Aorta (tissue), 5 donors: ENCODE measurements at regions of chr2 and their contacts with region 1.

Region 1: DNA sequence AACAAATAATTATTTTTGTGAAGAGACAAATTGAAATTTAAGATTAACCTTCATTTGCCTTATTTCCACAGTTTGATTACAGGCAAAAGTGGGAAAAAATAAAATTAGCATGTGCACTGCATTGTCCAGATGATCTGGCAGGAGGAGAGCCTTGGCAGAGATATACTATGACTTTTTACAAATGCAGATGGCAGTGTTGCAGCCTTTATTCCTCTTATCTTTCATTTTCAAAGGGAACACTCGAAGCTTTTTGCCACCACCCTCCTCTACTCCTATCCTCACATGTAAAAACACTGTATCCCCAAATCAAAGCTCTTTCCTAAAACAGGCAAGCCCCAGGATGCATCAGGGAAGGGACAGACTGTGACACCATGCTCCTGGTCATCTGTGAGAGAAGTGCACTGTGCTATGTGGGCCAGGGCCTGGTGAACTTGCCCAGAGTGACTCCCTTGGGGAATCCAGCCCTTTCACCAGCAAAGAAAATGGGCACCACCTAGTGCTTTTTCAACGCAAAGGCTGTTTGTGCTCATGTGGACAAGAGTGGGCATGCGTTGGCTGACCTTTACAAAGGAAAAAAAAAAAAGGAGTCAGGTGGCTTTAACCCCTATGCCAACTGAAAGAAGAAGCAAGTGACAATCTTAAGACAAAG is 74.7 kb upstream of the ETAA1 start:
- DNase-seq: peak; percentile 60 to 75
- ATAC-seq: peak; percentile 81
- H3K4me3 ChIP-seq: no peak overlapping the region
- H3K27ac ChIP-seq: peak overlapping the region in 1 of 2 donors; percentile 79
- H3K4me1 ChIP-seq: no peaks in the 10 kb centered on the region
- H3K27me3 ChIP-seq: no peaks in the 10 kb centered on the region

Region 2: DNA sequence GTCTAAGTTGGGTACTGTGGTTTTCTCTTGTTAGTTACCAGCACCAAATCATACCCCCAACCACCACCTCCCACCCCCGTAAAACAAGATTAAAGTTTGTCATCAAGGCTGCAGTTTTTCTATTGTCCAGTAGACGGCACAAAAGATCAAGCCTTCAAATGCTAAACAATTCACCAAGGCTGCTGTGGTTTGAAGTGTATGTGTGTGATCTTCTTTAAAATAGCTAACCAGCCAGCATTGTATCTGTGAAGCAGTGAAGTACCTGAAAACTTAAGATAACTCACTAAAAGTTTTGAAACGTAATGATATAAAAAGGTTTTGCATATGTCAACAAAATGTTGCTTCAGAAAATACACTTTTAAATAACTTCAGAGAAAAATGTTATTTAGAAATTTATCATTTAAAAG is 893.4 kb before region 1 on chr2:
- intact Hi-C with region 1: loop called (anchors 5 to 10 kb)
- DNase-seq: no peak
- ATAC-seq: no peak
- H3K4me3 ChIP-seq: no peak overlapping the region
- H3K27ac ChIP-seq: no peak overlapping the region
- H3K4me1 ChIP-seq: no peaks in the 10 kb centered on the region
- H3K27me3 ChIP-seq: no peaks in the 10 kb centered on the region

Region 3: DNA sequence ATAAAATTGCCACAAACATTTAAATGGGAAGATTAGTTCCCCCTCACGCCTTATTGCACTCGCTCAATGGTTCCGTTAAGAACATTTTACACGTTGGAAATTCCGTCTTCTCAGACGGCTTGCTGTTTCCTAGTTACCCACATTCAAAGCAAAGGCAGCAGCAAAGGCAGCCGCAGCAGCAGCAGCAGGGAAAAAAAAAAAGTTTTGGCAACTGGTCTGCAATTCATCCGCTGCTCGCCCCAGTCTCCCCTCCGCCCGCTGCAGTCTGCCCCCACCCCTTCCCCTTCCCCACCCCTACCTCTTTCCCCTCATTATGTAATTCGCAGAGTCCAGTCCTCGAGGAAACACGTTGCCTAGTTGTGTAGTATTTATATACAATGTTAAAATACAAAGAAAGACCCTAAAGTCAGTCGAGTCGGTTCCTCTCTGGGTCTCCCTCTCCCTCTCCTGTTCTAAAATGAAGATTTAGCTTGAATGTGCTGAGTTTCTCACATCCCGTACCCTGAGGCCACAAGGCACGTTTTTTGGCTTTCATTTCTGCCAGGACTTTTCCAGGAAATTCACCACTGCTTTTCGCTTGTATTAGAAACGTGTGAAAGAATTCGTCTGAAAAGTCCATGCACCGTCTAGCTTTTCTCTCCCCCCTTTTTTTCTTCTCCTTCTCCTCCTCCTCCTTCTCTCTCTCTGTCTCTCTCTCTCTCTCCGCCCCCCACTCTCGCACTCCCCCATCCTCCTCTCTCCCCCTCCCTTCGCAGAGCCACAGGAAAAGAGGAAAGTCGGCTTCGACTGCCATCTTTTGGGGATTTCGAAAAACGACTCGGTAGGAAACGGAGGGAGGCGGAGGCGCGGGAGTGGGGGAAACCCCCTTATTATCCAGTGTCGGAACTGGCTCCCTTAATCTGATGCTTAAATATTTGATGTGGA is 747.5 kb before region 1 on chr2:
- intact Hi-C with region 1: loop called in 1 of 2 experiments (anchors 5 kb)
- DNase-seq: peak; percentile 82 to 85
- ATAC-seq: peak; percentile 80
- H3K4me3 ChIP-seq: peak overlapping the region; percentile 50 to 71
- H3K27ac ChIP-seq: peak overlapping the region; percentile 61 to 94
- H3K4me1 ChIP-seq: no peaks in the 10 kb centered on the region
- H3K27me3 ChIP-seq: no peaks in the 10 kb centered on the region

Region 4: GRCh38 chr2:66839551-66840320 is 482.7 kb before region 1 on chr2:
- intact Hi-C with region 1: loop called in 1 of 2 experiments (anchors 10 kb)
- DNase-seq: no peak
- ATAC-seq: peak; percentile 54
- H3K4me3 ChIP-seq: no peak overlapping the region
- H3K27ac ChIP-seq: peak overlapping the region; percentile 83 to 90
- H3K4me1 ChIP-seq: peaks cover 0 to 2% of the 10 kb centered on the region in 2 donors
- H3K27me3 ChIP-seq: no peaks in the 10 kb centered on the region

Region 5: GRCh38 chr2:68031542-68032160 is 709.2 kb after region 1 on chr2:
- intact Hi-C with region 1: loop called in 1 of 2 experiments (anchors 10 kb)
- DNase-seq: no peak
- ATAC-seq: peak; percentile 64
- H3K4me3 ChIP-seq: no peak overlapping the region
- H3K27ac ChIP-seq: no peak overlapping the region
- H3K4me1 ChIP-seq: no peaks in the 10 kb centered on the region
- H3K27me3 ChIP-seq: no peaks in the 10 kb centered on the region